Activated naive CD4-positive, alpha-beta T cell treated with anti-CD3 and anti-CD28 coated beads for 36 hours (primary cell): ENCODE measurements at regions of chr4 and their contacts with region 1.

Region 1: DNA sequence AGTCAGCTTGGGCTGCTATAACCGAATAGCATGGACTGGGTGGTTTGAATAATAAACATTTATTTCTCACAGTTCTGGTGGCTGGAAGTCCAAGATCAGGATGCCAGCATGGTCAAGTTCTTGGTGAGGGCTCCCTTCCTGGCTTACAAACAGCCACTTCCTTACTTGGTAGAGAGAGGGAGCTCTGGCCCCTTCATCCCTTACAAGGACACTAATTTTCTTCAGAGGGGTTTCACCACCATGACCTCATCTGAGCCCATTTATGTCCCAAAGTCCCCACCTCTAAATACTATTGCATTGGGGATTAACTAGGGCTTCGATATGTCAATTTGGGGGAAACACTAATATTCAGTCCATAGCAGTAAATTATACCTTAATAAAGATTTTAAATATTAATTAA is 61.8 kb downstream of the CLNK start:
- DNase-seq: no peak
- H3K4me3 Mint-ChIP-seq: no peak overlapping the region
- H3K27ac Mint-ChIP-seq: no peak overlapping the region
- H3K4me1 Mint-ChIP-seq: no peaks in the 10 kb centered on the region
- H3K27me3 Mint-ChIP-seq: peaks cover 2% of the 10 kb centered on the region

Region 2: GRCh38 chr4:10893395-10893794 is 270.7 kb after region 1 on chr4:
- CTCF ChIA-PET with region 1: no interaction called
- intact Hi-C with region 1: loop called (anchors 10 kb)
- DNase-seq: peak; percentile 4
- H3K4me3 Mint-ChIP-seq: no peak overlapping the region
- H3K27ac Mint-ChIP-seq: no peak overlapping the region
- H3K4me1 Mint-ChIP-seq: no peaks in the 10 kb centered on the region
- H3K27me3 Mint-ChIP-seq: peaks cover 11% of the 10 kb centered on the region